ENCODE measurements at regions of chr21 and their contacts with region 1.

Region 1: GRCh38 chr21:27466140-27466539 is 499.3 kb upstream of the ADAMTS5 start:
- DNase-seq: no peak
- ATAC-seq: no peak
- H3K4me3 ChIP-seq: no peak overlapping the region
- H3K4me3 Mint-ChIP-seq: no peak overlapping the region
- H3K27ac ChIP-seq: no peak overlapping the region
- H3K27ac Mint-ChIP-seq: no peak overlapping the region
- H3K4me1 ChIP-seq: no peaks in the 10 kb centered on the region
- H3K4me1 Mint-ChIP-seq: no peaks in the 10 kb centered on the region
- H3K27me3 ChIP-seq: no peaks in the 10 kb centered on the region
- H3K27me3 Mint-ChIP-seq: no peaks in the 10 kb centered on the region

Region 2: GRCh38 chr21:27393726-27394125 is 72.4 kb before region 1 on chr21:
- CTCF ChIA-PET with region 1: no interaction called
- POLR2A ChIA-PET with region 1: interaction called in 1 of 2 experiments, 11 read pairs
- DNase-seq: no peak
- ATAC-seq: no peak
- H3K4me3 ChIP-seq: no peak overlapping the region
- H3K4me3 Mint-ChIP-seq: no peak overlapping the region
- H3K27ac ChIP-seq: no peak overlapping the region
- H3K27ac Mint-ChIP-seq: no peak overlapping the region
- H3K4me1 ChIP-seq: no peaks in the 10 kb centered on the region
- H3K4me1 Mint-ChIP-seq: no peaks in the 10 kb centered on the region
- H3K27me3 ChIP-seq: no peaks in the 10 kb centered on the region
- H3K27me3 Mint-ChIP-seq: no peaks in the 10 kb centered on the region

Measured in T-cell (primary cell).